Transverse colon (tissue), 4 donors: ENCODE measurements at regions of chr2 and their contacts with region 1.

Region 1: GRCh38 chr2:121382744-121383143 is 97.7 kb upstream of the TFCP2L1 start:
- DNase-seq: no peak
- H3K4me3 ChIP-seq: no peak overlapping the region
- H3K27ac ChIP-seq: no peak overlapping the region
- H3K4me1 ChIP-seq: no peaks in the 10 kb centered on the region
- H3K27me3 ChIP-seq: no peaks in the 10 kb centered on the region
- CTCF ChIP-seq: no peak
- EP300 ChIP-seq: no peak
- POLR2A ChIP-seq: no peak

Region 2: GRCh38 chr2:121699421-121700333 is 316.9 kb after region 1 on chr2:
- in situ Hi-C with region 1: loop called in 1 of 4 experiments (anchors 25 kb)
- intact Hi-C with region 1: no loop called
- DNase-seq: peak; percentile 52
- H3K4me3 ChIP-seq: no peak overlapping the region
- H3K27ac ChIP-seq: peak overlapping the region in 1 of 4 donors; percentile 23
- H3K4me1 ChIP-seq: peaks cover 0 to 5% (median 0%) of the 10 kb centered on the region in 4 donors
- H3K27me3 ChIP-seq: no peaks in the 10 kb centered on the region
- CTCF ChIP-seq: no peak
- EP300 ChIP-seq: no peak
- POLR2A ChIP-seq: no peak